Activated CD4-positive, alpha-beta T cell treated with anti-CD3 and anti-CD28 coated beads, Interleukin-2, amount 10 ng/mL, durations not matched to agents 24 days and 14 days (primary cell): ENCODE measurements at regions of chr7 and their contacts with region 1.

Region 1: DNA sequence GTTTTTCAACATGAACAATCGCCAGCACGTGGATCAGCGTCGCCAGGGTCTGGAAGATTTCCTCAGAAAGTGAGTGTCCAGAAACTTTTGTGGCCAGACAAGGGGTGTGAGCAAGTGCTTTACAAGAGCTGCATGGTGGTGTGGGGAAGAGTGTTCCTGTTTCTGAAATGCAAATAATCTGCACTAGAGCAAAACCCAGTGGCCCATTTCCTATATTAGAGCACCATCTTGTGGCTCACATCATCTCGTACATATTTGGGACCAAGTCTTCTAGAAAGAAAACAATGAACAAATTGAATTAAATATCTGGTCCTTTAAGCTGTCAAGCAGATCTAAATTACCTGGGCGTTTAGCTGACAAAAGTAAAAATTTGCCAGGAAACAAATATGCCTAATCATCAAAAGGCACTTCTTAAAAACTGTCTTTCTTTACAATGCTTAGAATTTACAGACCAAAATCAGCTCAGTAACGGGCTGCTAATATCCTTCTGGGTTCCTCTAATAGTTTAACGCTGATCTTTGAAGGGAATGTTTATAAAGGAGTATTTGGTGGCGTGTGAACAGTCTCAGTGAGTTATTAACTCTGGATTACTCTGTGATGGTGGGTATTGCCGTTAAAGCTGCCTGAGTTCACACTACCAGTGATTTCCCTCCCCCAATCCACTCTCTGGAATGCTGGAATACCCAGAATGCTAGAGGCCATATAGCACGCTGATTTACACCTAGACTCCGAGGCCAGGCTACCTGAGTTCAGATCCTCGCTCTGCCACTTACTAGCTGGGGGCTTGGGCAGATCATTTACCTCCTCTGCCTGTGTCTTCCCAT is 73.6 kb downstream of the SNX10 start:
- DNase-seq: peak; percentile 88
- H3K4me3 Mint-ChIP-seq: no peak overlapping the region
- H3K27ac Mint-ChIP-seq: no peak overlapping the region
- H3K4me1 Mint-ChIP-seq: peaks cover 15% of the 10 kb centered on the region
- H3K27me3 Mint-ChIP-seq: no peaks in the 10 kb centered on the region

Region 2: GRCh38 chr7:25894902-25895791 is 470.1 kb before region 1 on chr7:
- intact Hi-C with region 1: loop called (anchors 2 kb)
- DNase-seq: peak; percentile 90
- H3K4me3 Mint-ChIP-seq: peak overlapping the region; percentile 75
- H3K27ac Mint-ChIP-seq: no peak overlapping the region
- H3K4me1 Mint-ChIP-seq: peaks cover 25% of the 10 kb centered on the region
- H3K27me3 Mint-ChIP-seq: peaks cover 17% of the 10 kb centered on the region

Region 3: DNA sequence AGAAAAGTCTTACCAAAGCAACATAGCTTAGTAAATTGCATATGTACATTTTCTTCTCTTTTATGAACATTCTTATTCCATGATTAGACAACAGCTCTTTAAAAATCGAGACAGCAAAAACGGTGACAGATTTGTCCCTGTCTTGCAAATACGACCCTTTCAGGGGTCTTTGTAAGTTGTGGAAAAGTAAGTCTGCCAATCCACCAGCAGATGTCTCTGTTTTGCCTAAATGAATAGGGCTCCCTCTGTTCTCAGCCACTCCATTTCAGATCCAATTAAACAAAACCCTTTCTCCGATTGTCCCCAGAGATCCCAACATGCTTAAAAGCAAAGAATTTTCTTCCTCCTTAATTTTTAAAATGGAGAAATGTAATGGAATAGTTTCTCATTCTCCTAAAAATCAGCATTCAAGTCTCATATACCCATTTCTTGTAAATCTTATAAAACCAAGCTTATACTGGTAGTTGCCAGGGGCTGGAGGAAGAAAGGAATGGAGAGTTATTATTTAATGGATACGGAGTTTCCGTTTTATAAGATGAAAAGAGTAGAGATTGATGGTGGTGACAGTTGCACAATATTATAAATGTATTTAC is 274.3 kb before region 1 on chr7:
- intact Hi-C with region 1: loop called (anchors 1 kb)
- DNase-seq: peak; percentile 75
- H3K4me3 Mint-ChIP-seq: peak overlapping the region; percentile 26
- H3K27ac Mint-ChIP-seq: peak overlapping the region; percentile 16
- H3K4me1 Mint-ChIP-seq: peaks cover 19% of the 10 kb centered on the region
- H3K27me3 Mint-ChIP-seq: peaks cover 3% of the 10 kb centered on the region

Region 4: GRCh38 chr7:26151953-26152781 is 213.1 kb before region 1 on chr7 and contains the start of gene NFE2L3:
- intact Hi-C with region 1: no loop called
- DNase-seq: peak; percentile 96
- H3K4me3 Mint-ChIP-seq: peak within 1 kb of the TSS; percentile 93
- H3K27ac Mint-ChIP-seq: peak within 1 kb of the TSS; percentile 99
- H3K4me1 Mint-ChIP-seq: peaks cover 43% of the 10 kb centered on the region
- H3K27me3 Mint-ChIP-seq: peaks cover 1% of the 10 kb centered on the region
- total RNA-seq, gene NFE2L3: 67.8 and 68.7 TPM in 2 replicates

Region 5: DNA sequence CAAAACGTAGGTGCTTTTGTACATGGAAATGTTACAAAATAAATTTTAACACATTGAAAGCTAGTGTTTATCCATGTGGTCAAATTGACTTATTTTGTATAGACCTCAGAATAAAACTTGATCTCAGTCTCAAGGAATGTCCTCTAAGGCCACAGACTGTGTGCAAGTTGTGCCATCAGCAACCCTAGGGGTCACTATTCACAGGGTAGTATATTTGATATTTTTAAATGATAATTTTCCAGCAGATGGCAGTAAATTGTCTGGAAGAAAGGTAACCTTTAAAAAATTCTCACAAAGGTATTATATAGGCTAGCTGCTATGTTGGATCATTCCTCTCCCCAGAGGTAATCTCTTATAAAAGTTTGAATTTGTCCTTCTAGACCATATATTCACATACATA is 86.5 kb before region 1 on chr7:
- intact Hi-C with region 1: loop called (anchors 1 kb)
- DNase-seq: no peak
- H3K4me3 Mint-ChIP-seq: peak overlapping the region; percentile 35
- H3K27ac Mint-ChIP-seq: no peak overlapping the region
- H3K4me1 Mint-ChIP-seq: peaks cover 17% of the 10 kb centered on the region
- H3K27me3 Mint-ChIP-seq: peaks cover 3% of the 10 kb centered on the region

Region 6: GRCh38 chr7:26388256-26388655 is 23.0 kb after region 1 on chr7:
- intact Hi-C with region 1: no loop called
- DNase-seq: no peak
- H3K4me3 Mint-ChIP-seq: no peak overlapping the region
- H3K27ac Mint-ChIP-seq: no peak overlapping the region
- H3K4me1 Mint-ChIP-seq: no peaks in the 10 kb centered on the region
- H3K27me3 Mint-ChIP-seq: peaks cover 55% of the 10 kb centered on the region

Region 7: DNA sequence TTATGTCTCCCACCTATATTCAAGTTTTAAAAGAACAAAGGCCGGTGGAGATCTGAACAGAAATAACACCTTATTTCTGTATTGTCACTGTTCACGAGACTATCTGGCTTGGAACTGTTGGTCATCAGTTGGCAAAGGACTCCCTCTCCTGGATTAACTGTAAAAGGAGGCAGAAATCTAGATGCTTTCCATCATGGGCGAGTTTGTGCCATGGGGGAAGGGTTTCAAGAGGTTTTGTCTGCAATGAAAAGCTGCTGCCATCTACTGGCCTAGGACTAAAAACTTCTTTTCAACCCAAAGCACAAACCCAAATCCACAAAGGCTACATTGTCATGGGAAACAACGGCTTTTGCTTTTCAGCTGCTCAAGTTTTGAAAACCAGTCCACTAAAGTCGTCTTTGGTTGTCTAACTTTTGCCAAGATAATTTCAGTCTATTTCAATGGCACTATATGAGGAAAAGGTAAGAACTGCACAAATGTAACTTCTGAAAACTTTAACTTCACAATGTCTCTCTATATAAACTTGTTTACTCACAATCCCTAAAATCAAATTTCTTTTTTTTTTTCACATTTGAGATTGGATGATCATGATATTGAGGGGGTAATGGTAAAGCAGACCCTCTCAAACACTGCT is 302.3 kb after region 1 on chr7:
- intact Hi-C with region 1: loop called (anchors 1 kb)
- DNase-seq: peak; percentile 89
- H3K4me3 Mint-ChIP-seq: no peak overlapping the region
- H3K27ac Mint-ChIP-seq: no peak overlapping the region
- H3K4me1 Mint-ChIP-seq: peaks cover 10% of the 10 kb centered on the region
- H3K27me3 Mint-ChIP-seq: peaks cover 40% of the 10 kb centered on the region